ENCODE measurements at regions of chr5 and their contacts with region 1.

Region 1: GRCh38 chr5:54944364-54944763 is 41.0 kb downstream of the ESM1 start:
- DNase-seq: peak; percentile 75
- H3K4me3 ChIP-seq: no peak overlapping the region
- H3K27ac ChIP-seq: no peak overlapping the region
- H3K4me1 ChIP-seq: peaks cover 10% of the 10 kb centered on the region
- H3K27me3 ChIP-seq: no peaks in the 10 kb centered on the region
- CTCF ChIP-seq: peak; percentile 44 to 55
- POLR2A ChIP-seq: no peak

Region 2: DNA sequence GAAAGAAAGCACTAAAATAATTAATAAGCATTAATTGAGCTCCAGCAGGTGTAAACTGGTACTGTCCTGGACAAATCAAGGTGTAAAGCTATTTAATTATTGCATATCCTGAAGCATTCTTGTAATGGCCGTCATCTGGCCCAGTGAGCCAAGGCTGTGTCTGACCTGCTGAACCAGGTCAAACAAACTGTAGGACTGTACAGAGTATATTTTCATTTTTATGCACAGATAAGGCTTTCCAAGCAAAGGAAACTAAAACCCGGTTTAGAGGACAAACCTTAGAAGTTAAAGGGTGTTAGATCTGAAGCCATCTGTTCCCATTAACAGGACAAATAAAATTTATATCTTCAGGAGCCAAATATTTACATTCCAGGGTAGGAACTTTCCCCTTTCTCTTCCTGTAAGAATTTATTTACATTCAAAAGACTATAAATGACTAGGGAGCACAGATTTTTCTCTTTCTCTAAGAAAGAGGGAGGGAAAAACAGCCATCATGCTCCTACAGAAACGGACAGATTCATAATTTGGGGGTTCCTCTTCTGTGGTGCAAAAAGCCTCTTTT is 28.8 kb before region 1 on chr5:
- CTCF ChIA-PET with region 1: interaction called, 139 read pairs
- POLR2A ChIA-PET with region 1: no interaction called
- dilution Hi-C with region 1: no loop called
- intact Hi-C with region 1: loop called (anchors 1 kb)
- DNase-seq: peak; percentile 54
- H3K4me3 ChIP-seq: no peak overlapping the region
- H3K27ac ChIP-seq: no peak overlapping the region
- H3K4me1 ChIP-seq: peaks cover 18% of the 10 kb centered on the region
- H3K27me3 ChIP-seq: no peaks in the 10 kb centered on the region
- CTCF ChIP-seq: no peak
- POLR2A ChIP-seq: no peak

Region 3: GRCh38 chr5:54969856-54970828 is 25.8 kb after region 1 on chr5:
- CTCF ChIA-PET with region 1: interaction called, 180 read pairs
- POLR2A ChIA-PET with region 1: no interaction called
- dilution Hi-C with region 1: no loop called
- intact Hi-C with region 1: loop called (anchors 1 kb)
- DNase-seq: peak; percentile 88
- H3K4me3 ChIP-seq: no peak overlapping the region
- H3K27ac ChIP-seq: no peak overlapping the region
- H3K4me1 ChIP-seq: peaks cover 27% of the 10 kb centered on the region
- H3K27me3 ChIP-seq: no peaks in the 10 kb centered on the region
- CTCF ChIP-seq: no peak
- POLR2A ChIP-seq: no peak

Region 4: DNA sequence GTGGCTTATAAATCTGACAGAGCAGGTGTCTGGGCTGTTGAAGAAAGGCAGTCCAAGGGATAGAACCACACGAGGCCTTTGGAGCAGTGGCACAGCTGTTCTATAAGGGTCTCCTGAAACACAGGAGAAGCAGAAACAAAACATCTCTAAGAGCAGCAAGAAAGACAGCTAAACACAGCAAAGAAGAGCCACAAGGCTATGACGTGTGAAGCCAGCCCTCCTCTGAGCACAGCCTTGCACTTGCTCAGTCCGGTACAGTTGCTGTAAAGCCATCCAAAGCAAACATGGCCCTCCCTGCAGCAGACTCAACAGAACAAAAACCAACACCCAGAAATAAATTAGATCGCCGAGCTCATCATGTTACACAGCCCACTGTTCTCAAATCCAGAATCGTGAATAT is 77.0 kb after region 1 on chr5:
- CTCF ChIA-PET with region 1: interaction called, 13 read pairs
- POLR2A ChIA-PET with region 1: no interaction called
- dilution Hi-C with region 1: no loop called
- intact Hi-C with region 1: no loop called
- DNase-seq: no peak
- H3K4me3 ChIP-seq: no peak overlapping the region
- H3K27ac ChIP-seq: no peak overlapping the region
- H3K4me1 ChIP-seq: no peaks in the 10 kb centered on the region
- H3K27me3 ChIP-seq: no peaks in the 10 kb centered on the region
- CTCF ChIP-seq: no peak
- POLR2A ChIP-seq: no peak

Region 5: GRCh38 chr5:55146543-55147151 is 202.3 kb after region 1 on chr5:
- CTCF ChIA-PET with region 1: interaction called, 99 read pairs
- POLR2A ChIA-PET with region 1: no interaction called
- dilution Hi-C with region 1: no loop called
- intact Hi-C with region 1: loop called (anchors 1 kb)
- DNase-seq: peak; percentile 92
- H3K4me3 ChIP-seq: no peak overlapping the region
- H3K27ac ChIP-seq: no peak overlapping the region
- H3K4me1 ChIP-seq: peaks cover 5% of the 10 kb centered on the region
- H3K27me3 ChIP-seq: no peaks in the 10 kb centered on the region
- CTCF ChIP-seq: peak; percentile 90 to 94
- POLR2A ChIP-seq: no peak